CD8-positive, alpha-beta T cell (primary cell): ENCODE measurements at regions of chr2 and their contacts with region 1.

Region 1: GRCh38 chr2:231530091-231531011 is at the start of gene NMUR1:
- DNase-seq: peak; percentile 48 to 89 (median 69)
- ATAC-seq: peak; percentile 92
- H3K4me3 ChIP-seq: peak within 1 kb of the TSS; percentile 33 to 50
- H3K4me3 Mint-ChIP-seq: peak within 1 kb of the TSS; percentile 58
- H3K27ac ChIP-seq: peak within 1 kb of the TSS in 1 of 2 experiments; percentile 67
- H3K27ac Mint-ChIP-seq: peak within 1 kb of the TSS; percentile 32
- H3K4me1 ChIP-seq: peaks cover 33% of the 10 kb centered on the region
- H3K4me1 Mint-ChIP-seq: peaks cover 30% of the 10 kb centered on the region
- H3K27me3 ChIP-seq: peaks cover 0 to 7% of the 10 kb centered on the region in 2 experiments
- H3K27me3 Mint-ChIP-seq: peaks cover 8% of the 10 kb centered on the region
- CTCF ChIP-seq: peak; percentile 89
- total RNA-seq, gene NMUR1: 0.27 to 0.50 TPM

Region 2: GRCh38 chr2:231227309-231228162 is 302.8 kb before region 1 on chr2:
- CTCF ChIA-PET with region 1: no interaction called
- POLR2A ChIA-PET with region 1: no interaction called
- intact Hi-C with region 1: no loop called
- DNase-seq: peak in 8 of 9 experiments; percentile 10 to 73 (median 37)
- ATAC-seq: peak; percentile 89
- H3K4me3 ChIP-seq: no peak overlapping the region
- H3K4me3 Mint-ChIP-seq: no peak overlapping the region
- H3K27ac ChIP-seq: no peak overlapping the region
- H3K27ac Mint-ChIP-seq: no peak overlapping the region
- H3K4me1 ChIP-seq: no peaks in the 10 kb centered on the region
- H3K4me1 Mint-ChIP-seq: no peaks in the 10 kb centered on the region
- H3K27me3 ChIP-seq: no peaks in the 10 kb centered on the region
- H3K27me3 Mint-ChIP-seq: no peaks in the 10 kb centered on the region
- CTCF ChIP-seq: peak; percentile 64

Region 3: GRCh38 chr2:231280846-231281245 is 249.5 kb before region 1 on chr2:
- CTCF ChIA-PET with region 1: no interaction called
- POLR2A ChIA-PET with region 1: no interaction called
- intact Hi-C with region 1: no loop called
- DNase-seq: no peak
- ATAC-seq: no peak
- H3K4me3 ChIP-seq: no peak overlapping the region
- H3K4me3 Mint-ChIP-seq: no peak overlapping the region
- H3K27ac ChIP-seq: no peak overlapping the region
- H3K27ac Mint-ChIP-seq: no peak overlapping the region
- H3K4me1 ChIP-seq: no peaks in the 10 kb centered on the region
- H3K4me1 Mint-ChIP-seq: no peaks in the 10 kb centered on the region
- H3K27me3 ChIP-seq: no peaks in the 10 kb centered on the region
- H3K27me3 Mint-ChIP-seq: no peaks in the 10 kb centered on the region
- CTCF ChIP-seq: no peak

Region 4: GRCh38 chr2:231549446-231550239 is 19.3 kb after region 1 on chr2:
- CTCF ChIA-PET with region 1: interaction called, 10 read pairs
- POLR2A ChIA-PET with region 1: interaction called, 3 read pairs
- intact Hi-C with region 1: no loop called
- DNase-seq: no peak
- ATAC-seq: no peak
- H3K4me3 ChIP-seq: no peak overlapping the region
- H3K4me3 Mint-ChIP-seq: no peak overlapping the region
- H3K27ac ChIP-seq: no peak overlapping the region
- H3K27ac Mint-ChIP-seq: no peak overlapping the region
- H3K4me1 ChIP-seq: peaks cover 20% of the 10 kb centered on the region
- H3K4me1 Mint-ChIP-seq: peaks cover 40% of the 10 kb centered on the region
- H3K27me3 ChIP-seq: no peaks in the 10 kb centered on the region
- H3K27me3 Mint-ChIP-seq: no peaks in the 10 kb centered on the region
- CTCF ChIP-seq: no peak